Heart left ventricle (tissue), 16 donors: ENCODE measurements at regions of chr7 and their contacts with region 1.

Region 1: GRCh38 chr7:74371381-74372341 is 82.0 kb upstream of the GTF2IRD1 start:
- DNase-seq: peak in 1 of 5 donors; percentile 12
- ATAC-seq: no peak
- H3K4me3 ChIP-seq: no peak overlapping the region
- H3K27ac ChIP-seq: peak overlapping the region in 3 of 12 donors; percentile 5 to 81 (median 27)
- H3K4me1 ChIP-seq: peaks cover 0 to 23% (median 4%) of the 10 kb centered on the region in 12 donors
- H3K27me3 ChIP-seq: no peaks in the 10 kb centered on the region
- CTCF ChIP-seq: no peak
- POLR2A ChIP-seq: no peak

Region 2: DNA sequence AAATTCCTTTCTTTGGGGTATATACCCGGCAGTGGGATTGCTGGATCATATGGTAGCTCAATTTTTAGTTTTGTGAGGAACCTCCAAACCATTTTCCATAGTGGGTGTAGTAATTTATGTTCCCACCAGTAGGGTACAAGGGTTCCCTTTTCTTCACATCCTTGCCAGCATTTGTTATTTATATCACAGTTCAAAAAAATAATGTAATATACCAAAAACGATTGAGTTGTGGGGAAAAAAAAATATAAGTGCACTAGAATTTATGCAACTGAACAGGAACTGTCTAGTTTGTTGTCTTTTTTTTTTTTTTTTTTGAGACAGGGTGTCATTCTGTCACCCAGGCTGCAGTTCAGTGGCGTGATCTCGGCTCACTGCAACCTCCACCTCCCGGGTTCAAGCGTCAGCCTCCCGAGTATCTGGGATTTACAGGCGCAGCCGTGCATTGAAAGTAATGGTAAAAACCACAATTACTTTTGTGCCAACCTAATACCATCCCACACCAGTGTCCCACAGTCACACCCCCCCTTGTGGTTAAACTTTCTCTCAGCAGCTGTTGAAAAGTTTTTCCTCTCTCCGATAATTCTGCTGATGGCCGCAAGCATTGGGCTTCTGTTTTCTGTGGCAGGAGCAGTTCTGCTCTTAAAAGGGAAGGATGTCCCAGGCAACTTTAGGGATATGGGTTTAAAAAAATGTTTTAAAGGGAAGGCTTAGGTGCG is 168.7 kb before region 1 on chr7:
- intact Hi-C with region 1: no loop called
- DNase-seq: peak in 1 of 5 donors; percentile 15
- ATAC-seq: peak in 2 of 4 donors; percentile 18 to 51
- H3K4me3 ChIP-seq: no peak overlapping the region
- H3K27ac ChIP-seq: peak overlapping the region in 1 of 12 donors; percentile 58
- H3K4me1 ChIP-seq: peaks cover 0 to 9% (median 0%) of the 10 kb centered on the region in 12 donors
- H3K27me3 ChIP-seq: no peaks in the 10 kb centered on the region
- CTCF ChIP-seq: peak in 6 of 12 donors; percentile 15 to 46 (median 36)
- POLR2A ChIP-seq: no peak

Region 3: GRCh38 chr7:74231232-74231590 is 140.4 kb before region 1 on chr7:
- intact Hi-C with region 1: loop called in 1 of 10 experiments (anchors 10 kb)
- DNase-seq: no peak
- ATAC-seq: no peak
- H3K4me3 ChIP-seq: no peak overlapping the region
- H3K27ac ChIP-seq: no peak overlapping the region
- H3K4me1 ChIP-seq: peaks cover 0 to 40% (median 0%) of the 10 kb centered on the region in 12 donors
- H3K27me3 ChIP-seq: no peaks in the 10 kb centered on the region
- CTCF ChIP-seq: no peak
- POLR2A ChIP-seq: no peak